ENCODE measurements at regions of chr5 and their contacts with region 1.

Region 1: DNA sequence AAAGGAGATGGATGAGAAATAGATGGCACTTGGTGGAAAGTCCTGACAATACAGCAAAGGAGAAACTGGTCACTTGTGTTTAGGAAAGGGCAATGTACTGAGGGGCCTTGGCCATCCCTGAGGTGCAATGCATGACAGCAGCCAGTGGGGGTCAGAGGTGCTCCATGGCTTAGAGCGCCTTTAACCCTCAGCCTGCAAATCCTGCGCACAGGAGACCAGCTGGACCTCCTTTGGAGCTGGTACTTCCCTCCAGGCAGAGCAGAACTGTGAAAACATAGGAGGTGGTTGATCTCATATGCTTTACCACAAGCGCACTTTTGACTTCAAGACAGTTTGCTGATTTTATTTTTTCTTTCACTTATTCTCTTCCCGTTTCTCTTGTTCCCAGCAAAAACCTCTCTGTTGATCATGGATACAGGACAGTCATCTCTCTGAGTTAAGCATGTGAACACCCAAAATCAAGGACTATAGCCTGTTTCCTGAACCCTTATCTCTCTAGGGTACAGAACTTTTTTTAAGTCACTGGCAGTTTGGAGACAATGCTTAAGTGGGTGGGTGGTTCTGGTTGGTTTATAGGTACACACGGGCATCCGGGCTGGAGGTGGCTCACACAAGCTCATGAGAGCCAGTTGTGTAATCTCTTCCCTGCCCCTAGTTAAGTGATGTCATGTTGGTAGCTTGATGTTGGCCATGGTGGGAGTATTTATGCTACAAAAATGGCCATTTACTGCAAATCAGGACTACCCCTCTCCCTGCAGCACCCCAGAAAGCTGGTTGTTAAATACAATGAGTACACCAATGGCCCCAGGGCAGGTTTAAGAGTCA is 37.6 kb upstream of the ANKRD55 start:
- DNase-seq: peak; percentile 89
- H3K4me3 Mint-ChIP-seq: peak overlapping the region; percentile 31
- H3K27ac Mint-ChIP-seq: peak overlapping the region; percentile 82
- H3K4me1 Mint-ChIP-seq: peaks cover 20% of the 10 kb centered on the region
- H3K27me3 Mint-ChIP-seq: no peaks in the 10 kb centered on the region

Region 2: GRCh38 chr5:56282216-56282615 is 11.4 kb after region 1 on chr5:
- CTCF ChIA-PET with region 1: interaction called, 18 read pairs
- POLR2A ChIA-PET with region 1: no interaction called
- intact Hi-C with region 1: no loop called
- DNase-seq: no peak
- H3K4me3 Mint-ChIP-seq: no peak overlapping the region
- H3K27ac Mint-ChIP-seq: no peak overlapping the region
- H3K4me1 Mint-ChIP-seq: no peaks in the 10 kb centered on the region
- H3K27me3 Mint-ChIP-seq: no peaks in the 10 kb centered on the region

Region 3: DNA sequence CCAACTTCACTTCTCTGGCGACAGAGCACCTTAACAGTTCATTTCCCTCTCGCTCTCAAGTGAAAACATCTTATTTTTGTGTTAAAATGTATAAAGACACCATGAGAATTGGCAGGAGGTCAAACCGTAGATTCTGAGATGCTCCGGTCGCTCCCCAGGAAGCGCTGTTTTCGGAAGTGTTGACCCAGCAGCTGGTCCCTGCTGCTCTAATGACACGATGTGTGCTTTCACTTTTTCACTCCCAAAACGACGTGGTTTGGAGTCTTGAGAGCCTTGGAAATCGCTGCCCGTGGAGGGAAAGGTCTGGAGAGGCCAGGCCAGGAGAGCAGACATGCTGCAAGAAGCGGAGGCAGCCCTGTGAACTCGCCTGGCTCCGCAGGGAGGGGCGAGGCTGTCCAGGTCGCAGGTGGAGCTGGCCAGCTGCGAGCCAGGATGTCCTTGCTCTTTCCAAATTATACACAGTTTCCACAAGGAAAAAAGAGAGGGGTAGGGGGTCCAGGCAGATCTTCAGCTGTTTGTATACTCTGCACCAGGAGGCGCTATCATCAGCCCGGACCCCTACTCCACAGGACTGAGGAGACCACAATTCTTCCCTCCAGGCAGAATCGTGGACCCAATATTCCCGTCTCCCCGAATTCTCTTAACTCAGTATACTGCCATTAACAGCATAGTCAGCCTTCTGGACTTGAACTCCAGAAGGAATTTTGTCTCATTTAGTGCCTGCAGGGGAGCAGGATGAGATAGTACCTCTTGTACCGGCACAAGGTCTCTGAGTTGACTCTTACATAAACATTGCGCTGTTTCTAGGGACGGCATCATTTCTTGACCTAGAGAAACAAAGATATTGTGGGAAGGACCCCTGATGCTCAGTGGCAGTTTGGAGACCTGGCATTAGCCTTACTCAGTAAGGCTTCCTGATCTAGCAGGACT is 210.9 kb after region 1 on chr5:
- CTCF ChIA-PET with region 1: interaction called, 15 read pairs
- POLR2A ChIA-PET with region 1: no interaction called
- intact Hi-C with region 1: loop called (anchors 2 kb)
- DNase-seq: peak; percentile 32
- H3K4me3 Mint-ChIP-seq: peak overlapping the region; percentile 75
- H3K27ac Mint-ChIP-seq: peak overlapping the region; percentile 75
- H3K4me1 Mint-ChIP-seq: peaks cover 41% of the 10 kb centered on the region
- H3K27me3 Mint-ChIP-seq: no peaks in the 10 kb centered on the region

Region 4: DNA sequence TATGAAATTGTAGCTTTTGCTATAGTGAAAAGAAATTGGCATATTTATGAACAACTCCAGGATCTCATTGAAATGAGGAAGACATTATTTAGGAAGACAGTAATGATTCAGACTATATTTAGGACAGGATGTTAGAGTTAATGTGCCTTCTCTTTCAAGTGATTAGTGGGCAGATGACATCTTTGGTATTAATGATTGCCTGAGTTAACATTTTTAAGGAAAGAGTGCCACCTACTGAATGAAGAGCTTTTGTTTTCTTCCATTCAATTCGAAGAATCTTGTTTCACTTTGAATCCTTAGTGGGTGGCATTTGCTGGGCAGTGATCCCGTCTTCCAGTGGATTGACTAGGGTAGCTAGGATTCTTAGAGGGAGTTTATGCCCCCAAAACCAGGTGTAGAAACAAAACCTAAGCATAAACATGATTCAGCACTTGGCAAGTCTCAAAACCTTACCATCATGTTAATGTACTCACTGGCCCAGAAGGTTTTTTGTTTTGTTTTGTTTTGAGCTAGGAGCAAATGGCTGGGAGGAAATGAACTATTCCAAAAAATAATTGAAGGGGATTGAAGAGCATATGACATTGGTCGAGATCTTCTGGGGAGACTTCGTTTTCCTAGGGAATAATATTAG is 567.7 kb after region 1 on chr5:
- CTCF ChIA-PET with region 1: interaction called, 172 read pairs
- POLR2A ChIA-PET with region 1: no interaction called
- intact Hi-C with region 1: loop called (anchors 1 kb)
- DNase-seq: no peak
- H3K4me3 Mint-ChIP-seq: peak overlapping the region; percentile 55
- H3K27ac Mint-ChIP-seq: peak overlapping the region; percentile 80
- H3K4me1 Mint-ChIP-seq: peaks cover 85% of the 10 kb centered on the region
- H3K27me3 Mint-ChIP-seq: no peaks in the 10 kb centered on the region

Region 5: GRCh38 chr5:57137401-57137800 is 866.6 kb after region 1 on chr5:
- CTCF ChIA-PET with region 1: interaction called, 8 read pairs
- POLR2A ChIA-PET with region 1: no interaction called
- intact Hi-C with region 1: loop called (anchors 5 kb)
- DNase-seq: no peak
- H3K4me3 Mint-ChIP-seq: no peak overlapping the region
- H3K27ac Mint-ChIP-seq: no peak overlapping the region
- H3K4me1 Mint-ChIP-seq: no peaks in the 10 kb centered on the region
- H3K27me3 Mint-ChIP-seq: no peaks in the 10 kb centered on the region

Region 6: DNA sequence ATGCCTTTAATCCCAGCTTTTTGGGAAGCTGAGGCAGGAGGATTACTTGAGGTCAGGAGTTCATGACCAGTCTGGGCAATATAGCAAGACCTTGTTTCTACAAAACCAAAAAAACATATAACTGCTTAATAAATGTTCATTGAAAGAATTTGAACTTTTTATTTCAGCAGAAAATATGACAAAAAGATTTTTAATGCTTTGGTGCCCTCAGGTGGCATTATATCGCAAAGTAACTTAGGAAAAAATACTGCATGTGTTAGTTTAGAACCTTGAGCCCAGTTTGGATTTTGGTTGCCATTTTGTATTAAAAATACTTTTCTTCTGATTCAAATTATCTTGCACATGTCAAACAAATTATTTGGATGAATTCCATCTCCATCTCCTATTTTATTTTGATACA is 1006.3 kb after region 1 on chr5:
- CTCF ChIA-PET with region 1: no interaction called
- POLR2A ChIA-PET with region 1: no interaction called
- intact Hi-C with region 1: loop called (anchors 2 kb)
- DNase-seq: no peak
- H3K4me3 Mint-ChIP-seq: no peak overlapping the region
- H3K27ac Mint-ChIP-seq: no peak overlapping the region
- H3K4me1 Mint-ChIP-seq: no peaks in the 10 kb centered on the region
- H3K27me3 Mint-ChIP-seq: peaks cover 5% of the 10 kb centered on the region